GM12878 (cell line): ENCODE measurements at regions of chr4 and their contacts with region 1.

Region 1: GRCh38 chr4:112284662-112285411 is 867 bp downstream of the TIFA start:
- DNase-seq: no peak
- ATAC-seq: peak; percentile 23
- H3K4me3 ChIP-seq: peak overlapping the region; percentile 80
- H3K27ac ChIP-seq: peak overlapping the region; percentile 99
- H3K4me1 ChIP-seq: peaks cover 19% of the 10 kb centered on the region
- H3K27me3 ChIP-seq: no peaks in the 10 kb centered on the region
- CTCF ChIP-seq: no peak
- EP300 ChIP-seq: 0 out of 4 replicates have a peak, but pooled peaks of 1 of the 2 experiments have one; percentile 2
- POLR2A ChIP-seq: no peak
- RAD21 ChIP-seq: no peak

Region 2: GRCh38 chr4:112153211-112153791 is 131.5 kb before region 1 on chr4:
- CTCF ChIA-PET with region 1: no interaction called
- POLR2A ChIA-PET with region 1: no interaction called
- RAD21 ChIA-PET with region 1: no interaction called
- SMC1A ChIA-PET with region 1: no interaction called
- in situ Hi-C with region 1: no loop called
- intact Hi-C with region 1: no loop called
- DNase-seq: no peak
- ATAC-seq: no peak
- H3K4me3 ChIP-seq: no peak overlapping the region
- H3K27ac ChIP-seq: no peak overlapping the region
- H3K4me1 ChIP-seq: no peaks in the 10 kb centered on the region
- H3K27me3 ChIP-seq: no peaks in the 10 kb centered on the region; a peak in 1 of 4 replicates
- CTCF ChIP-seq: no peak
- EP300 ChIP-seq: no peak
- POLR2A ChIP-seq: no peak
- RAD21 ChIP-seq: no peak

Region 3: GRCh38 chr4:112266821-112267220 is 18.0 kb before region 1 on chr4:
- CTCF ChIA-PET with region 1: interaction called, 6 read pairs
- POLR2A ChIA-PET with region 1: interaction called, 7 read pairs
- RAD21 ChIA-PET with region 1: interaction called, 4 read pairs
- SMC1A ChIA-PET with region 1: interaction called, 10 read pairs
- in situ Hi-C with region 1: no loop called
- intact Hi-C with region 1: no loop called
- DNase-seq: no peak
- ATAC-seq: peak; percentile 53
- H3K4me3 ChIP-seq: no peak overlapping the region
- H3K27ac ChIP-seq: no peak overlapping the region
- H3K4me1 ChIP-seq: no peaks in the 10 kb centered on the region
- H3K27me3 ChIP-seq: no peaks in the 10 kb centered on the region
- CTCF ChIP-seq: peak; percentile 26 to 43 (median 32); a peak in 3 of 6 replicates
- EP300 ChIP-seq: no peak
- POLR2A ChIP-seq: no peak
- RAD21 ChIP-seq: peak; percentile 54

Region 4: DNA sequence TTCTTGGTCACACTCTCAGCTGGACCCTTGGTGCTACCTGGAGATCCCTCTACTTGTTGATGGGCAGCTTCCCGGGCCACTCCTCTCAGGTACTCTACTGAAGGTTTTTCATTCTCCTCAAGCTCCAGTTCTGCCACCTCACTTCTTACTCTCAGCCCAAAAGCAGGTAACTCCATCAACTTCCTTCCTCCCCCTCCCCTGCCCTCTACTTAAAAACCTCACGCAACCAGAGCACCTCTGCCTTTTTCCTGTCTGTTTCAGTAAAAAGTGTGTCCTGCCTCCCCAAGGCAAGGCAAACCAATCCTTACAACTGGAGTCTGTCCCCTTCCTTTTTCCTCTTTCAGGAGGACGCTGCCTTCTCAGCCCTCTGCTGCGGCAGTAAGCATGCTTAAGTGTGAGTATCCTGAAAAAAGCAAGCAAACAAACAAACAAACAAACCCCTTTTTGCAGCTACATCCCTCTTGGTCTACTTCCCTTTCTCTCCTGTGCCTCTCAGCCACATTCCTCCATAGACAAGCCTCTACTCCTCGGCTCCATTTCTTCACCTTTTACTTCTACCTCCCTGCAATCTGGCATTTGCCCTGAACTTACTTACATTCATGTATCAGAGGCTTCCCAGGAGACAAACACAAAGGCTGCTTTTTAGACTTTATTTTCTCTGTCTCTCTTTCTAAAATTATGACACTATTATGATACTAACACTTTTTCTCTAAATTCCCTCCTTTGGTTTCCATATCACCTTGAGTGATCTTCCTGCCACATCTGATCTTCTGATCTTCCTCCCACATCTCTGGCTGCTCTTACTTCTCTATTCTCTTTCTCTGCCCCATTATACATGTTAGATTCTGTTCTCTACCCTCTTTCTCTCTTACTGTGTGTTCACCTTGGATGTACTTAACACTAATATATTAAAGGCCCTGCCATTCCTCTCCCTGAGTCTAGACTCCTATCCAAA is 17.8 kb after region 1 on chr4:
- CTCF ChIA-PET with region 1: interaction called, 8 read pairs
- POLR2A ChIA-PET with region 1: interaction called, 45 read pairs
- RAD21 ChIA-PET with region 1: interaction called, 73 read pairs
- SMC1A ChIA-PET with region 1: interaction called, 74 read pairs
- in situ Hi-C with region 1: no loop called
- intact Hi-C with region 1: no loop called
- DNase-seq: no peak
- ATAC-seq: peak; percentile 83
- H3K4me3 ChIP-seq: no peak overlapping the region; the same call in 1 of the 2 replicates
- H3K27ac ChIP-seq: peak overlapping the region; percentile 67
- H3K4me1 ChIP-seq: peaks cover 17% of the 10 kb centered on the region
- H3K27me3 ChIP-seq: no peaks in the 10 kb centered on the region
- CTCF ChIP-seq: no peak
- EP300 ChIP-seq: no peak
- POLR2A ChIP-seq: no peak
- RAD21 ChIP-seq: no peak

Region 5: DNA sequence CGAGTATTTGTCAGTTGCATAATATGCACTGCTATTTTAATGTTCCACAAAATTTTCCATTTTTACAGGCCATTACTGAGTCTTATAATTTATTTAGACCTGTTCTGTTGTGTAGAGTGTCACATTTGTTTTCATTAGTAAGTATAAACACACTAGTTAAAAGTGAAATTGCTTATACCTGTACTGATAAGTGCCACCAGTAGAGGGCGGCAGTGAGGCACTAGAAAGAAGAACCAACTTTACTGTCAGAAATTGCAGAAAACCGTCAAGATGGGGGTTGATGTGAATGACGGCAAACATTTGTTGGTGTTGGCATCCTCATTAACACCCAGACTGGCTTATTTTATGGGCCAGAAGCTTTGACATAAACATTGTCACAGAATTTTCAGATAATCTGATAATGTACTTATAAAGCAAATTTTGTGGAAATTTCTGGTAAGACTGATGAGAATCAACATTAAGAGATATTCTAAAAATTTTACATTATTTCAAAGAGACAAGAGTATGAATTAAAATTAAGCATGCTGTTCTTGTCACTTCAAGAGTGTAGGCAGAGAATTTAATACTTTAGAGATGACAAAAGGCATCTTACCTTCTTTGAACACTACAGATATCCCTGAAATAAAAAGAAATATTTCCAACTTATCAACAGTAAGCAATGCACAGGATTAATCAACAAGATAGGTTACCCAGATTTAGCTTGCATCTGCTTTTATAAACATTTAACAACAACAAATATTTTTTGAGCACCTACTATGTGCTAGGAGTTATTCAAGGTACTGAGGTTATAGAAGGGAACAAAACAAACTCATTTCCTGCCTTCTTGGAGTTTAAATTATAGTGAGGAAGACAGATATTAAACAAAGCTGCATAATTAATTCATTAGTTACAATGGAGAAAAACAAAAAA is 37.2 kb after region 1 on chr4:
- CTCF ChIA-PET with region 1: interaction called, 27 read pairs
- POLR2A ChIA-PET with region 1: interaction called, 25 read pairs
- RAD21 ChIA-PET with region 1: interaction called, 151 read pairs
- SMC1A ChIA-PET with region 1: interaction called, 247 read pairs
- in situ Hi-C with region 1: loop called (anchors 5 kb)
- intact Hi-C with region 1: loop called (anchors 1 kb)
- DNase-seq: no peak
- ATAC-seq: peak; percentile 44
- H3K4me3 ChIP-seq: no peak overlapping the region
- H3K27ac ChIP-seq: no peak overlapping the region
- H3K4me1 ChIP-seq: peaks cover 29% of the 10 kb centered on the region
- H3K27me3 ChIP-seq: no peaks in the 10 kb centered on the region
- CTCF ChIP-seq: peak; percentile 76 to 87 (median 77)
- EP300 ChIP-seq: no peak
- POLR2A ChIP-seq: no peak
- RAD21 ChIP-seq: peak; percentile 80

Region 6: DNA sequence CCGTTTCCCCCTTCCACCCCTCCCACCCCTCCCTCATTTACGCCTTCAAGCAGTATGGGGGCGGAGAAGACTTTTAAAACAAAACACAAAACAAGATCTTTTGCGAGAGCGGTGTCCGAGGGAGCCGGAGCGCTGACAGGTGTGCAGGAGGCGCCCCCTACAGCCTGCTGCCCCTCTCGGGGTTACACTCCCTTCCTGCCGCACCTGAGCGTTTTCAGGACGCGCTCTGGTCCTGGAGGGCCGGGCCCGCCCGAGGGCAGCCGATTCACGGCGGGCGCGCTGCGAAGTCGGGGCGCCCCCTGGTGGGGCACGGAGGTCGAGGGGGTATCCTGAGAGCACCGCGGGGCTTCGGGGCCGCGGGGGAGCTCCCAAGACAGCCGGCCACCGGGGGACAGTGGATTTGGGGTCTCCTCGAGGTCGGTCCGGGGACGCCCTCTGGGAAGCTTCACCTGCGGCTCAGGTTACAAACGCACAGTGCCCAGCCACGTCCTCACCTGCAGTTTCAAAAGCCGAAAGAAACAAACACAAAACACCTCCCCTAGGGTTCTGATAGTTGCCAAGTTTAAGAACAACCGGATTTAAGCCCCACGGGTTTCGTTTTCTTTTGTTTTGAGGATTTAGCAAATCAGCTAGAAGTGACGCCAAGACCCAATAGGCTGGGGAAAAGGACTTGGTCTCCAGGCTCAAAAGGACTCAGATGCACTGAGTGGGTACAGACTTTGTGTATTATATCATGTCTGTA is 239.1 kb after region 1 on chr4:
- CTCF ChIA-PET with region 1: interaction called, 22 read pairs
- POLR2A ChIA-PET with region 1: interaction called, 4 read pairs
- RAD21 ChIA-PET with region 1: interaction called, 4 read pairs
- SMC1A ChIA-PET with region 1: interaction called, 12 read pairs
- in situ Hi-C with region 1: no loop called
- intact Hi-C with region 1: loop called (anchors 5 kb)
- DNase-seq: no peak
- ATAC-seq: peak; percentile 96
- H3K4me3 ChIP-seq: peak overlapping the region; percentile 73; the same call in 1 of the 2 replicates
- H3K27ac ChIP-seq: no peak overlapping the region
- H3K4me1 ChIP-seq: peaks cover 3% of the 10 kb centered on the region
- H3K27me3 ChIP-seq: no peaks in the 10 kb centered on the region; a peak in 2 of 4 replicates
- CTCF ChIP-seq: peak; percentile 88 to 92 (median 90)
- EP300 ChIP-seq: no peak
- POLR2A ChIP-seq: no peak
- RAD21 ChIP-seq: peak; percentile 85

Region 7: GRCh38 chr4:113761620-113762185 is 1476.9 kb after region 1 on chr4 and contains the start of gene CAMK2D:
- CTCF ChIA-PET with region 1: no interaction called
- POLR2A ChIA-PET with region 1: no interaction called
- RAD21 ChIA-PET with region 1: no interaction called
- SMC1A ChIA-PET with region 1: no interaction called
- in situ Hi-C with region 1: no loop called
- intact Hi-C with region 1: loop called (anchors 10 kb)
- DNase-seq: peak; percentile 81
- ATAC-seq: peak; percentile 56
- H3K4me3 ChIP-seq: peak within 1 kb of the TSS; percentile 99
- H3K27ac ChIP-seq: peak within 1 kb of the TSS; percentile 98
- H3K4me1 ChIP-seq: no peaks in the 10 kb centered on the region
- H3K27me3 ChIP-seq: no peaks in the 10 kb centered on the region
- CTCF ChIP-seq: peak; percentile 60 to 95 (median 69)
- EP300 ChIP-seq: peak in 1 of 2 experiments; percentile 33; a peak in 2 of 4 replicates
- POLR2A ChIP-seq: no peak
- RAD21 ChIP-seq: peak; percentile 89
- polyA plus RNA-seq, gene CAMK2D: 6.9 to 10.2 TPM